Thyroid gland (tissue), 4 donors: ENCODE measurements at regions of chr9 and their contacts with region 1.

Region 1: DNA sequence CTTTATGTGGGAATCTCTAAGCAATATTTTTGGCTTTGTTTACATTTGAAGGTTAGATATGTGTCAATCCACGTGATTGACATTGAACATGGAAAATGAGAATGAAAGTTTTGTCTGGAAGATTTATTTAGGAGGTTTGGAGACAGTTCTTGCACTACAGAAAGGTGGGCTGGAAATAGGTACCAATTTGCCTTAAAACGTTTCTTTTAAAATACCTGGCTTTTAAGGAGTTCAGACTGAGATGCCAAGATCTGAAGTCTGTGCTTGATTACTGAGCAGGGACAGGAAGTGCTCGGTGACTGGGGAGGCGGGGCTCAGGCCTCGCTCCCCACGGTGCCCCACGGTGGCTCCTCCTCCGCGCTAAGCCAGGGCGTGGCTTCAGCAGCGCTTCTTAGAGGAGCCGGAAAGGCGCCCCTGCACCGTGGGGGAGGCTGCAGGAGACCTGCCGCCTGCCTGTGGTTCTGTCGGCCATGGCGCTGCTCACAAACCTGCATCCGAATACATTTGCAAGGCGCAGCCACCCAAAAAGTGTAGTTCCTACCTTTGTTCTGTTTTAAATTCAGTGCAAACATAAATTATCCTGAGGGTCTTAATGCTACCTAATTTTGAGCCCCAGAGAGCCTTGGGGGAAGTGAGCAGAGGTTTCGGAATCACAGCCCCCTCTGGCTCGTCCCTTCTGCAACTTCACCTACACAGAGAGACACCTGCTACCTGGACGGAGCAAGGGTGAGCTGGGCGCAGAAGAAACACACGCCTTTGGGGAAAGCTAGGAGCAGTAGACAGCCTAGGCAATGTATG is 49.2 kb downstream of the USP20 start:
- DNase-seq: peak; percentile 97 to 98
- H3K4me3 ChIP-seq: no peak overlapping the region
- H3K27ac ChIP-seq: peak overlapping the region; percentile 44 to 77 (median 68)
- H3K4me1 ChIP-seq: peaks cover 32 to 33% of the 10 kb centered on the region in 2 donors
- H3K27me3 ChIP-seq: no peaks in the 10 kb centered on the region
- CTCF ChIP-seq: no peak
- POLR2A ChIP-seq: peak in 1 of 2 donors; percentile 80

Region 2: GRCh38 chr9:130042833-130043653 is 158.6 kb after region 1 on chr9 and contains the start of gene FNBP1:
- intact Hi-C with region 1: loop called (anchors 5 kb)
- DNase-seq: peak; percentile 82
- H3K4me3 ChIP-seq: peak within 1 kb of the TSS; percentile 63 to 89 (median 88)
- H3K27ac ChIP-seq: peak within 1 kb of the TSS; percentile 96 to 99 (median 98)
- H3K4me1 ChIP-seq: peaks cover 33 to 42% of the 10 kb centered on the region in 2 donors
- H3K27me3 ChIP-seq: no peaks in the 10 kb centered on the region
- CTCF ChIP-seq: no peak
- POLR2A ChIP-seq: peak; percentile 81 to 93
- total RNA-seq, gene FNBP1: 55.8 to 78.5 (median 76.0) TPM

Region 3: GRCh38 chr9:130107234-130107861 is 222.9 kb after region 1 on chr9:
- intact Hi-C with region 1: loop called (anchors 10 kb)
- DNase-seq: peak; percentile 88 to 92
- H3K4me3 ChIP-seq: no peak overlapping the region
- H3K27ac ChIP-seq: no peak overlapping the region
- H3K4me1 ChIP-seq: peaks cover 14 to 22% of the 10 kb centered on the region in 2 donors
- H3K27me3 ChIP-seq: no peaks in the 10 kb centered on the region
- CTCF ChIP-seq: peak; percentile 29 to 89 (median 74)
- POLR2A ChIP-seq: no peak

Region 4: DNA sequence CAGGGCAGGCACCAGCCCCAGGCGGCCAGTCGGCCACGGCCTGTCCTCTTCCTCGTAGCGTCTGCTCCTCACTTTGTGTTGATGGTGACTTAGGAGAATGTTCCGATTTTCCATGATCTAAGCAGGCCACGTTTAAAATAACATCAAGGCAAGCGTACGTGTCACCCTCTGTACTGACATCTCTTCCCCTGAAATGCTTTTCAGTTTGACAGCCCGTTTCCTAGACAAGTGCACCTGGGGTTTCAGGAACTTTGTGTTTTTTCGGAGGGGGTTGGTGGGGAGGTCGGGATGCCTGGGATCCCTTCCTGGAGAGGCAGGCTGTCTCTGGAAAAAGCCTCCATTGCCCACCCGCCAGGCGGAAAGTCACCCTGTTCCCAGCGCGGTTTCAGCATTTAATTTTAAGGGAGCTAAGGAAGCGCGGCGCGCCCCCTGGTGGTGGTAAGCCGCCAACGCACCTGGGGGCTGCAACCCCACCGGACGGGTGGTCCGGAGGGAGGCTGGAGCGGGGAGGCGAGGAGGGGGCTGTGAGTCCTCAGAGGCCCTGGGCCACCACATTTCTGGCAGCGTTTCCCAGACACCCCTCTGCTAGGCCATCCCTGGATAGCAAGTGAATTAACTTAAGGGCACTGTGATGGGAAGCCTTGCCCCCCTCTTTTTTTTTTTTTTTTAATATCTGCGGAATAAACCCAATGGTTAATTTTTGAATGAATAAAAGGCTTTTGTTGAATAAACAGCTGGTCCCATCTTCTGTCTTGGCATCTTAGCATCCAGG is 351.7 kb after region 1 on chr9:
- intact Hi-C with region 1: loop called (anchors 10 kb)
- DNase-seq: peak; percentile 59 to 68
- H3K4me3 ChIP-seq: no peak overlapping the region
- H3K27ac ChIP-seq: peak overlapping the region in 2 of 3 donors; percentile 96
- H3K4me1 ChIP-seq: peaks cover 47% of the 10 kb centered on the region in 2 donors
- H3K27me3 ChIP-seq: no peaks in the 10 kb centered on the region
- CTCF ChIP-seq: peak; percentile 95 to 99 (median 98)
- POLR2A ChIP-seq: no peak